ENCODE measurements at regions of chr22 and their contacts with region 1.

Region 1: GRCh38 chr22:42090596-42091454 is at the start of gene NDUFA6:
- DNase-seq: peak; percentile 100
- total RNA-seq, gene NDUFA6: 109 and 139 TPM in 2 replicates

Region 2: GRCh38 chr22:42180349-42180842 is 89.6 kb after region 1 on chr22:
- in situ Hi-C with region 1: loop called (anchors 25 kb)
- DNase-seq: peak; percentile 16

Measured in Caki2 (cell line).